ENCODE measurements at regions of chr14 and their contacts with region 1.

Region 1: GRCh38 chr14:103576371-103577024 is 13.7 kb downstream of the COA8 start:
- DNase-seq: peak; percentile 88 to 95 (median 91)
- ATAC-seq: peak; percentile 92 to 98 (median 97)
- H3K4me3 ChIP-seq: peak overlapping the region in 1 of 12 donors; percentile 11
- H3K27ac ChIP-seq: peak overlapping the region in 11 of 12 donors; percentile 27 to 76 (median 58)
- H3K4me1 ChIP-seq: peaks cover 3 to 49% (median 20%) of the 10 kb centered on the region in 12 donors
- H3K27me3 ChIP-seq: no peaks in the 10 kb centered on the region
- CTCF ChIP-seq: no peak
- POLR2A ChIP-seq: no peak

Region 2: DNA sequence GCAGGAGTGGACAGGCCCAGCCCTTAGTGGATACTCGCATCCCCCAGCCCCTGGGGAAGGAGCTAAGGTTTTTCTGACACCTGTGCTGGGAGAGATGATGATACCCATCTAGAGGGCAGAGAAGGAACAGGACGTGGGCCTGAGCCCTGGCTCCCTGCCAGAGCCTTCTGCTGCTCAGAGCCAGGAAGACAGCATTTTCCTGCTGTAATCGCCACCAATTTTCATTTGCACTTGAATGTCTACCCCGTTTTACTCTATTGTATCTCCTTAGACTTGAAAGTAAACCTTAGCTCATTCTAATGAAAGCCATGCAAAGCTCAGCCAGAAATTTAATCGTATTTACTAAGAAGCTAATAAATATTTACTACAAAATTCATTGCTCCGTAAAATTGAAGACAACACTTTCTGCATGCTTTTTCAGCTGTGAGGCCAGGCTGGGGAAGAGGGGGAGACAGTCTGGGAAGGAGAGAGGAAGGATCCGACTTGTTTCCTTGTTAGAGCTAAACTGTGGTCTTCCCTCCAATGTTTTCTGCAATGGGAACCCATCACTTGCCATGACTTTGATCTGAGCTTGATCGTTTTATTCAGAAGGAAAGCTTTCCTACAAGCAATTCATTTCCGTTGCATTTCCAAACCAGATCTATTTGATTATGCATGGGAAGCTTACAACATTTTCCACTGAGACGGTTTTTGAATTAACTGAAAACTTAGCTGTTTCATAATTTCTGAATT is 816.9 kb before region 1 on chr14:
- intact Hi-C with region 1: no loop called
- DNase-seq: no peak
- ATAC-seq: no peak
- H3K4me3 ChIP-seq: no peak overlapping the region
- H3K27ac ChIP-seq: no peak overlapping the region
- H3K4me1 ChIP-seq: peaks cover 0 to 6% (median 0%) of the 10 kb centered on the region in 12 donors
- H3K27me3 ChIP-seq: peaks cover 0 to 13% (median 0%) of the 10 kb centered on the region in 9 donors
- CTCF ChIP-seq: no peak
- POLR2A ChIP-seq: no peak

Region 3: GRCh38 chr14:103628684-103629502 is 52.4 kb after region 1 on chr14 and contains the start of gene KLC1:
- intact Hi-C with region 1: loop called in 4 of 10 experiments (anchors 5 to 10 kb)
- DNase-seq: peak; percentile 88 to 94 (median 91)
- ATAC-seq: peak; percentile 51 to 86 (median 80)
- H3K4me3 ChIP-seq: peak within 1 kb of the TSS; percentile 83 to 100 (median 95)
- H3K27ac ChIP-seq: peak within 1 kb of the TSS; percentile 97 to 100 (median 99)
- H3K4me1 ChIP-seq: peaks cover 6 to 75% (median 59%) of the 10 kb centered on the region in 12 donors
- H3K27me3 ChIP-seq: no peaks in the 10 kb centered on the region
- CTCF ChIP-seq: peak in 3 of 12 donors; percentile 7 to 17 (median 14)
- POLR2A ChIP-seq: peak in 1 of 2 donors; percentile 85
- total RNA-seq, gene KLC1: 127 to 241 (median 150) TPM

Region 4: GRCh38 chr14:103646189-103646588 is 69.7 kb after region 1 on chr14:
- intact Hi-C with region 1: no loop called
- DNase-seq: no peak
- ATAC-seq: peak in 1 of 4 donors; percentile 41
- H3K4me3 ChIP-seq: no peak overlapping the region
- H3K27ac ChIP-seq: no peak overlapping the region
- H3K4me1 ChIP-seq: peaks cover 0 to 51% (median 14%) of the 10 kb centered on the region in 12 donors
- H3K27me3 ChIP-seq: no peaks in the 10 kb centered on the region
- CTCF ChIP-seq: no peak
- POLR2A ChIP-seq: no peak

Region 5: DNA sequence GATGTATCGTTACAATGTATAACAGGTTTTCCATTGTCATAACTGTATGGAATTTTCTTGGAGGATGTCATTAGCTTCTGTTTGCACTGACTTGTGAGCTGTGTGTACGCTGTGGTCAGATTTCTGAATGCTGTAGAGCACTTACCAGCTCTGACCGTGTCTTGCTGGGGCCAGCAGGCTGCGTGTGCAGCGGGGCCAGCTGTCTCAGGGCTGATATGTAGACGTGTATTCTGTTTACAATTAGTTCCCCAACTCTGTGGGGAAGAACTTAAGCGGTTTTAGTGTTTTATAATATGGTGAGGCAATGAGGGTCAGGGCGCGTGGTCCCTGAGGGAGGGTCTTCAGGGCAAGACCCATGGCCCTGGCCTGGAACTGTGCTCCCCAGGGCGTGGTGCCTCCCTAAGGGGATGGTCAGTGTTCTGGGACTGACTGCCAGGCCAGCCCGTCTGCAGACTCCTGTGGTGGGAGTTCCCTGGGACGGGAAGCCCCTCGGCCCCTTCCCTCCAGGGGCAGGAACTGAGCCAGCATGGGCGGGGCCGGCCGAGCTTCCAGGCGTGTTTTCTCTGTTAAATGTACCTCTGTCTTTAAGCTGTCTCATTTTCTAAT is 120.1 kb after region 1 on chr14:
- intact Hi-C with region 1: loop called in 1 of 10 experiments (anchors 10 kb)
- DNase-seq: peak; percentile 50 to 86 (median 71)
- ATAC-seq: peak; percentile 29 to 63 (median 35)
- H3K4me3 ChIP-seq: peak overlapping the region in 1 of 12 donors; percentile 2
- H3K27ac ChIP-seq: peak overlapping the region; percentile 41 to 72 (median 46)
- H3K4me1 ChIP-seq: peaks cover 12 to 64% (median 49%) of the 10 kb centered on the region in 12 donors
- H3K27me3 ChIP-seq: no peaks in the 10 kb centered on the region
- CTCF ChIP-seq: no peak
- POLR2A ChIP-seq: no peak

Region 6: GRCh38 chr14:103730490-103731035 is 154.1 kb after region 1 on chr14:
- intact Hi-C with region 1: loop called in 1 of 10 experiments (anchors 10 kb)
- DNase-seq: peak; percentile 71 to 90 (median 80)
- ATAC-seq: peak; percentile 83 to 91 (median 85)
- H3K4me3 ChIP-seq: no peak overlapping the region
- H3K27ac ChIP-seq: peak overlapping the region in 6 of 12 donors; percentile 23 to 64 (median 42)
- H3K4me1 ChIP-seq: peaks cover 0 to 37% (median 12%) of the 10 kb centered on the region in 12 donors
- H3K27me3 ChIP-seq: no peaks in the 10 kb centered on the region
- CTCF ChIP-seq: peak in 1 of 12 donors; percentile 12
- POLR2A ChIP-seq: no peak

Region 7: DNA sequence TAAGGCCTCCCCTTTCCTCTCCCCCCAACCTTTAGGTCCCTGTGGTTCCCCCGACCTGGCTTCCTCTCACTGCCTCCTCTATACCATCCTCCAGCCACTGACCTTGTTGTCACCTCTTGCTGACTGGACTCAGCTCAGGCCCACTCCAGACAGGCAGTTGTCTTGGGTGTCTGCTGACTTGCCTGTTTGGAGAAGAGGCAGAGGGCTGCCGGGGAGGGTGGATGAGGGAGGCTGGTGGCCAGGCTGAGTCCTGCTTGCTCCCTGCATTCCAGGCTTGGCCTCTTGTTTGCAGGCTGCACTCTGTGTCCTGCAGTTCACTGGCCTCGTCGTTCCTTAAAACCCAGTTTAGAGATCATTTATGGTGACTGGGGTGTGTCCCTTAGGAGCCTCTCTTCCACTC is 396.9 kb after region 1 on chr14:
- intact Hi-C with region 1: loop called in 2 of 10 experiments (anchors 10 kb)
- DNase-seq: no peak
- ATAC-seq: peak in 3 of 4 donors; percentile 29 to 64 (median 36)
- H3K4me3 ChIP-seq: no peak overlapping the region
- H3K27ac ChIP-seq: no peak overlapping the region
- H3K4me1 ChIP-seq: peaks cover 0 to 7% (median 0%) of the 10 kb centered on the region in 12 donors
- H3K27me3 ChIP-seq: no peaks in the 10 kb centered on the region
- CTCF ChIP-seq: no peak
- POLR2A ChIP-seq: no peak

Region 8: DNA sequence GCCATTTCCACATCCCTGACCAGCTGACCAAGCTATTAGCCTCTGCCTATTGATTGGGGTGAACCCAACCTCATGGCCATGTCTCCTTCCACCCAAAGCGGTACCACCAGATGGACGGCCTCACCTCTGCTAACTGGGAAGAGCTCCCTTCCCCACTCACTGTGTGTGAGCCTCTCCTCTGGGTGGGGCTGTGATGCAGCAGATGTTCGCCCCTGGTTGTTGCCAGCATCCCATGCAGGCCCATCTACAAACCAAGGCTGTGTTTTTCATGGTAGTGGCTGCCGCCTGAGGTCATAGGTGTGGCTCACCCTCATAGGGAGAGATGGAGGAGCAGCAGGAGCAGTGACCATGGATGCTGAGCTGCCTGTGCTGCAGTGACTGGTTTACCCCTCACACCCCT is 413.5 kb after region 1 on chr14:
- intact Hi-C with region 1: loop called in 2 of 10 experiments (anchors 10 kb)
- DNase-seq: no peak
- ATAC-seq: no peak
- H3K4me3 ChIP-seq: no peak overlapping the region
- H3K27ac ChIP-seq: no peak overlapping the region
- H3K4me1 ChIP-seq: no peaks in the 10 kb centered on the region
- H3K27me3 ChIP-seq: peaks cover 0 to 9% (median 0%) of the 10 kb centered on the region in 9 donors
- CTCF ChIP-seq: no peak
- POLR2A ChIP-seq: no peak

Measured in heart left ventricle (tissue), 16 donors.